CD14-positive monocyte (primary cell): ENCODE measurements at regions of chr5 and their contacts with region 1.

Region 1: DNA sequence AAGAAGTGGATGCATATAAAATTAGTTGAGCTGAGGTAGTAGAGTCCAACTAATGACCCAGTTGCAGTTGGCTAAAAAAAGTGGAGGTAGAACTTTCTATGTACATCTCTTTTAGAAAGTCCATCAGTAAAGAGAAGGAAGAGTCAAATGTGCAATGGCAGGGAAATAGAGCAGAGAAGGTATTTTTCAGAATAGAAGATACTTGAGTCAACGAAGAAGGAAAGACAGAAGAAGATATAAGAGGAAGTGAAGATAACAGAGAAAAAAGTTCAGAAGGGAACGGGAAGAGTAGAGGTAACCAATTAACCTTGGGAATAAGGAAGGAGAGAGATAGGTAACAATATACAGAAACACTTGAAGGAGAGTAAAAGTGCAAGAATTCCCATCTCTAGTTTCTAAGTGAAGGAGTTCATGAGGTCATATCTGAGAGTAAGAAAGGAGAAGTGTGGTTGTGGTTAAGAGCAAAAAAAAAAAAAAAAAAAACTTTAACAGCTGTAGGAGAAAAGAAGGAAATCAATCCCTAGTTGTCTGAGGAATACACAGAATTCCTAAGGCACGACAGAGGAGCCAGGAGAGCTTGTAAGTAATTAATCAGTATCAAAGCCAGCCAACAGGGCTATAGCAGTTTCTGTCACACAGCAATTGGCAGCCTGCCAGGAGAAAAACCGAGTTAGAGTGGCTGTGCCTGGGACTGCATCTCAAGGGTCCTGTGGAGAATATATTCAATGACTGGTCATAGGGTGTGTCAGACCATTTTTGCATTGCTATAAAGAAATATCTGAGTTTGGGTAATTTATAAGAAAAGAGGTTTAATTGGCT is 61.0 kb downstream of the ARL15 start:
- DNase-seq: peak; percentile 11 to 46 (median 23)
- H3K4me3 ChIP-seq: peak overlapping the region in 1 of 3 experiments; percentile 33
- H3K4me3 Mint-ChIP-seq: no peak overlapping the region
- H3K27ac ChIP-seq: no peak overlapping the region
- H3K27ac Mint-ChIP-seq: no peak overlapping the region
- H3K4me1 ChIP-seq: peaks cover 18 to 22% of the 10 kb centered on the region in 2 donors
- H3K4me1 Mint-ChIP-seq: peaks cover 2% of the 10 kb centered on the region
- H3K27me3 ChIP-seq: no peaks in the 10 kb centered on the region
- H3K27me3 Mint-ChIP-seq: peaks cover 0 to 2% (median 0%) of the 10 kb centered on the region in 3 donors
- CTCF ChIP-seq: peak; percentile 10

Region 2: GRCh38 chr5:53991942-53992341 is 257.5 kb before region 1 on chr5:
- intact Hi-C with region 1: no loop called
- DNase-seq: no peak
- H3K4me3 ChIP-seq: no peak overlapping the region
- H3K4me3 Mint-ChIP-seq: no peak overlapping the region
- H3K27ac ChIP-seq: no peak overlapping the region
- H3K27ac Mint-ChIP-seq: no peak overlapping the region
- H3K4me1 ChIP-seq: peaks cover 7 to 12% of the 10 kb centered on the region in 2 donors
- H3K4me1 Mint-ChIP-seq: peaks cover 16% of the 10 kb centered on the region
- H3K27me3 ChIP-seq: no peaks in the 10 kb centered on the region
- H3K27me3 Mint-ChIP-seq: no peaks in the 10 kb centered on the region
- CTCF ChIP-seq: peak; percentile 32

Region 3: DNA sequence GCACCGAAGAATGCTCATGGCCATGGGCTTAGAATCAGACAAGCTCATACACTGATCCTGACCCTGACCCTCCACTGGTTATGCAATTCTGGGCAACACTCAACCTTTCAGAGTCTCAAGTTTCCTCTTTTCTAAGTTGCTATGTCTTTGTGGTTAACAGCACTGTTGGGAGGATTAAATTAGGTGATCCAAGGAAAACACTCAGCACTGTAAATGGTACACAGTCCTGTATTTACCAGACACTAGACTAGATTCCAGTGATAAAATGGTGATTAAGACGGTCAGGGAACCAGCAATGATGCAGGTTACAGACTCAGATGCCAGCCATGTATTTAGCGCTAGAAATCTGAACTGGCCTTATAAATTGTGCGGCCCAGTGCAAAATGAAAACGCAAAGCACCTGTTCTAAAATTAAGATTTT is 52.9 kb after region 1 on chr5:
- intact Hi-C with region 1: loop called in 1 of 2 experiments (anchors 5 kb)
- DNase-seq: peak; percentile 74 to 92 (median 82)
- H3K4me3 ChIP-seq: peak overlapping the region in 1 of 3 experiments; percentile 35
- H3K4me3 Mint-ChIP-seq: no peak overlapping the region
- H3K27ac ChIP-seq: peak overlapping the region; percentile 20 to 65
- H3K27ac Mint-ChIP-seq: peak overlapping the region; percentile 69 to 91 (median 83)
- H3K4me1 ChIP-seq: peaks cover 40 to 48% of the 10 kb centered on the region in 2 donors
- H3K4me1 Mint-ChIP-seq: peaks cover 57% of the 10 kb centered on the region
- H3K27me3 ChIP-seq: no peaks in the 10 kb centered on the region
- H3K27me3 Mint-ChIP-seq: peaks cover 0 to 2% (median 1%) of the 10 kb centered on the region in 3 donors
- CTCF ChIP-seq: no peak

Region 4: GRCh38 chr5:54317511-54318260 is 68.3 kb after region 1 on chr5:
- intact Hi-C with region 1: no loop called
- DNase-seq: no peak
- H3K4me3 ChIP-seq: no peak overlapping the region
- H3K4me3 Mint-ChIP-seq: no peak overlapping the region
- H3K27ac ChIP-seq: no peak overlapping the region
- H3K27ac Mint-ChIP-seq: no peak overlapping the region
- H3K4me1 ChIP-seq: no peaks in the 10 kb centered on the region
- H3K4me1 Mint-ChIP-seq: peaks cover 6% of the 10 kb centered on the region
- H3K27me3 ChIP-seq: peaks cover 0 to 5% of the 10 kb centered on the region in 2 donors
- H3K27me3 Mint-ChIP-seq: peaks cover 4 to 11% (median 11%) of the 10 kb centered on the region in 3 donors
- CTCF ChIP-seq: no peak

Region 5: DNA sequence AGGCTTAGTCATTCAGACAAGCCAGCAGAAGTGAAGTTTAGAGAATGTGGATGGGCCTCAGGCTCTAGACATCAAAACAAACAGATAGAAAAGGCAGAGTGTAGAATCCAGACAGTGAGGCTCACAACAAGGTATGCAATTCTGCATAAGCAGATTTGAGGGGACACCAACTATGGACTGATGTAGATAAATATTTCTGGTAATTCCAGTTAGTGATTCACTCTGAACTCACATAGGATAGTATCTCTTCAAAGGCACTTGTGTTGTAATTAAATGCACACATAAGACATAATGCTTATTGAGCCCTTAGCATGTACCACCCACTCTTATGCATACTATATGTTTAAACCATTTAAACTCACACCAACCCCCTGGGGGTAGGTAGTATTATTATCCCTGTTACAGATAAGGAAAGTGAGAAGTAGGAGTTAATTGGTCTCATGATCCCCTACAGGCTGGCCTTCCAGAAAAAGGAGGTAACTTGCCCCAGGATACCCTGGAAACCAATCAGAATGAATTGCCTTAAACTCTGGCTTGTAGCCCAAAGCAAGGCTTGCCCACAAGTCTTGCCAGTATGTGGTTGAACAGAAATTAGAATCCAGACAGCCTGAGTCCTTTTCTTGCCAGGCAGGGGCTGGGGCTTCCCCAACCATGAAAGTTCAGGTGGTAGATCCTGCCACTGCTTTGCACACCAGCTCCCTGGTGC is 166.6 kb after region 1 on chr5:
- intact Hi-C with region 1: loop called (anchors 5 kb)
- DNase-seq: no peak
- H3K4me3 ChIP-seq: no peak overlapping the region
- H3K4me3 Mint-ChIP-seq: no peak overlapping the region
- H3K27ac ChIP-seq: no peak overlapping the region
- H3K27ac Mint-ChIP-seq: no peak overlapping the region
- H3K4me1 ChIP-seq: no peaks in the 10 kb centered on the region
- H3K4me1 Mint-ChIP-seq: no peaks in the 10 kb centered on the region
- H3K27me3 ChIP-seq: no peaks in the 10 kb centered on the region
- H3K27me3 Mint-ChIP-seq: peaks cover 1 to 12% (median 6%) of the 10 kb centered on the region in 3 donors
- CTCF ChIP-seq: no peak